ENCODE measurements at regions of chr19 and their contacts with region 1.

Region 1: DNA sequence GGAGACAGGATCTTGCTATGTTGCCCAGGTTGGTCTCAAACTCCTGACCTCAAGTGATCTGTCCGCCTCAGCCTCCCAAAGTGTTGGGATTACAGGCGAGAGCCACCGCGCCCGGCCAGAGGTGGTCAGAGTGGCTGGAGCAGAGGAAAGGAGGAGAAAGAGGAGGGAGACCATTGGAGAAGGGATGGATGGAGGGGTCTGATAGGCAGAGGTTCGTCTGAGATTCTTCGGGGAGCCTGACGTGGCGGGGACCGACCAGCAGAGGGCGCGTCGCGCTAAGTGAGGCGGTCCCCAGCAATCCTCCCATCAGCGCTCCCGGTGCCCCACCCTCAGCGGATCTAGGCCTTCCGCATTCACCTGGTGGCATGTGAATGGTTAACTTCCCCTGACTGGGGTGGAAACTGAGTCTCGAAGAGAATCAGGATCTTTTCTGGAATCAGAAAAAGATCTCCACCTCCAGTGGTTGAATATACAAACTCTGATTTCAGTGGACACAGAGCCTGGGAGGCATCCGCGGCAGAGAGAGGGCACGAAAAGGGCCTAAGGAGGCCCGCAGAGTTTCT is 8.8 kb downstream of the GTPBP3 start:
- DNase-seq: peak; percentile 86
- H3K4me3 ChIP-seq: no peak overlapping the region
- H3K27ac ChIP-seq: no peak overlapping the region
- H3K4me1 ChIP-seq: peaks cover 12% of the 10 kb centered on the region
- H3K27me3 ChIP-seq: no peaks in the 10 kb centered on the region
- CTCF ChIP-seq: peak; percentile 91 to 96 (median 95)
- POLR2A ChIP-seq: no peak

Region 2: GRCh38 chr19:17385878-17386611 is 39.9 kb after region 1 on chr19:
- intact Hi-C with region 1: loop called (anchors 5 kb)
- DNase-seq: peak; percentile 56
- H3K4me3 ChIP-seq: no peak overlapping the region
- H3K27ac ChIP-seq: no peak overlapping the region
- H3K4me1 ChIP-seq: no peaks in the 10 kb centered on the region
- H3K27me3 ChIP-seq: no peaks in the 10 kb centered on the region
- CTCF ChIP-seq: peak; percentile 80 to 90 (median 81)
- POLR2A ChIP-seq: no peak